Lower leg skin (tissue), 4 donors: ENCODE measurements at regions of chr1 and their contacts with region 1.

Region 1: GRCh38 chr1:206036663-206037455 is 13.2 kb upstream of the CTSE start:
- DNase-seq: no peak
- H3K4me3 ChIP-seq: no peak overlapping the region
- CTCF ChIP-seq: no peak
- POLR2A ChIP-seq: no peak

Region 2: DNA sequence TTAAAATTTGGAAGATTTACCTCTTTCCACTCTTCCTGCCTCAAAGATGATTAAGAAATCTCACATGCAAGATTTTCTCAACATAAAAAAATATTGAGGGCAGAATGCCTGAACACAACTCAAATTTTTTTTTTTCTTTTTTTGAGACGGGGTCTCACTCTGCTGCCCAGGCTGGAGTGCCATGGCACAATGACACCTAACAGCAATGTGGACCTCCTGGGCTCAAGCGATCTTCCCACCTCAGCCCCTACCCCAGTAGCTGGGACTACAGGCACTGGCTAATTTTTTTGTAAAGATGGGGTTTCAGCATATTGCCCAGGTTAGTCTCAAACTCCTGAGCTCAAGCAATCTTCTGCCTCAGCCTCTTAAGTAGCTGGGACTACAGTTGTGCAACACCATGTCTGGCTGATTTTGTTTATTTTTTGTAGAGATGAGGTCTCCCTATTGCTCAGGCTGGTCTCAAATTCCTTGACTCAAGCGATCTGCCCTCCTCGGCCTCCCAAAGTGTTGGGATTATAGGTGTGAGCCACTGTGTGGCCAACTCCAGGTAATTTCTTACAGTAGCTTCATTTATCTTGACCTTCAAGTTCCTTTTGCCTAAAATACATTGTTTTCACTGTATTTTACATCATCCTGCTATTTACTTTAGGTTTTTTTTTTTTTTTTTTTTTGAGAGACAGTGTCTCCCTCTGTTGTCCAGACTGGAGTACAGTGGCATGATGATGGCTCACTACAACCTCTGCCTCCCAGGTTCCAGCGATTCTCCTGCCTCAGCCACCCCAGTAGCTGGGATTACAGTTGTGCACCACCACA is 297.3 kb before region 1 on chr1:
- intact Hi-C with region 1: no loop called
- DNase-seq: no peak
- H3K4me3 ChIP-seq: no peak overlapping the region
- CTCF ChIP-seq: no peak
- POLR2A ChIP-seq: no peak

Region 3: GRCh38 chr1:206014601-206015000 is 22.3 kb before region 1 on chr1:
- intact Hi-C with region 1: loop called (anchors 1 kb)
- DNase-seq: peak in 1 of 2 donors; percentile 34
- H3K4me3 ChIP-seq: no peak overlapping the region
- CTCF ChIP-seq: no peak
- POLR2A ChIP-seq: no peak